ENCODE measurements at regions of chr5 and their contacts with region 1.

Region 1: GRCh38 chr5:140267559-140268018 is 35.3 kb downstream of the PFDN1 start:
- DNase-seq: peak; percentile 54
- H3K4me3 ChIP-seq: peak overlapping the region; percentile 56
- H3K27ac ChIP-seq: peak overlapping the region; percentile 100
- H3K4me1 ChIP-seq: peaks cover 48% of the 10 kb centered on the region
- CTCF ChIP-seq: no peak

Region 2: GRCh38 chr5:140058212-140058932 is 209.2 kb before region 1 on chr5:
- CTCF ChIA-PET with region 1: no interaction called
- POLR2A ChIA-PET with region 1: no interaction called
- intact Hi-C with region 1: no loop called
- DNase-seq: no peak
- H3K4me3 ChIP-seq: no peak overlapping the region
- H3K27ac ChIP-seq: no peak overlapping the region
- H3K4me1 ChIP-seq: no peaks in the 10 kb centered on the region
- CTCF ChIP-seq: no peak

Region 3: DNA sequence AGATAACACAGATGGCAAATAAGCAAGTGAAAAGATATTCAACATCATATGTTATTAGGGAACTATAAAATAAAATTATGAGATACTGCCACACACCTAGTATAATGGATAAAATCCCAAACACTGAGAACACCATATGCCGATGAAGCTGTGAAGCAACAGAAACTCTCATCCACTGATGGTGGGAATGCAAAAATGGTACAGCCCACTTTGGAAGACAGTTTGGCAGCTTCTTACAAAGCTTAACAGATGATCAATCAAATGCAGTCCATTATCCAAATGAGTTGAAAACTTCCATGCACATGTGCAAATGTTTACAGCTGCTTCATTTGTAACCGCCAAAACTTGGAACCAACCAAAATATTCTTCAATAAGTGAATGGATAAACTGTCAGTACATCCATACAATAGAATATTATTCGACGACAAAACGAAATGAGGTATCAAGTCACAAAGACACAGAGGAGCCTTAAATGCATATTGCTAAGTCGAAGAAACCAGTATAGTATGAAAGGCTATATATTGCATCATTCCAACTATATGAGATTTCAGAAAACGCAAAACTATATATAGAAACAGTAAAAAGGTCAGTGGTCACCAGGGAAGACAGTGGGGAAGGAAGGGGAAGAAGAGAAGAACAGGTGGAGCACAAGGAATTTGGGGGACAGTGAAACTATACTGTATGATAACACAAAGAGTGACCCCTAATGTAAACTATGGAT is 20.4 kb after region 1 on chr5:
- CTCF ChIA-PET with region 1: no interaction called
- POLR2A ChIA-PET with region 1: interaction called, 81 read pairs
- intact Hi-C with region 1: loop called (anchors 1 kb)
- DNase-seq: no peak
- H3K4me3 ChIP-seq: no peak overlapping the region
- H3K27ac ChIP-seq: no peak overlapping the region
- H3K4me1 ChIP-seq: peaks cover 55% of the 10 kb centered on the region
- CTCF ChIP-seq: no peak

Region 4: DNA sequence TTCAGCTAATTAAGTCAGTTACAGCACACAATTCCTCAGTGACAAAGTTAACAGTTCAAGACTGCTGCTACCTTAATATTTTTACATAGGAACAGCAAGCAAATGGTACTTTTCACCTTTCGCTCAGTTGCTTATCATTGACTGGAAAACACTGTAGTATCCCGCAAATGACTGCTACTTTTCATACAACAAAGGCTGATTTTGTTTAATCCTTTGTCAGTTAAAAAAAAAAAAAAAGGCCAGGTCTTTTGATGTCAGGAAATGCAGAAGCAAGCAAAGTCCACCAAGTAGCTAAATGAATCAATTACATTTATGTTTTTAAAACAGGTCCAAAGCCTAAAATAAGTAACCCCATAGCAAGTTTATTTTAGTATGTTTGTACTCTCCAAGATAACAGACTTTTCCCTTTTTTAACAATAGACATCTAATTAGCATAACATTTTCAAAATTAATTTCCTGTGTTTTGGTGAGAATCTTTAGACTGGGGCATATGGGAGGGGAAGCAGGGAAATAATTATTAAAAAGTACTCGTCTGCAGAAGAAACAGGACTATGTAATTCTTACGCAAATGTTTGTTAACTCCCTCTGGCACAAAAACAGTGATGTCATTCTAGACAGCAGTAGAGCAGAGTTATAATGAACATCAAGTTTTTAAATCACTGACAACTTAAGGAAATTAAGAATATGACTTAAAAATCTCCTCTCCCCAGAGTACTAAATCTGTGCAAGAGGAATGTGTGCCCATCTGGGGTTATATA is 25.7 kb after region 1 on chr5:
- CTCF ChIA-PET with region 1: no interaction called
- POLR2A ChIA-PET with region 1: interaction called, 15 read pairs
- intact Hi-C with region 1: no loop called
- DNase-seq: no peak
- H3K4me3 ChIP-seq: peak overlapping the region; percentile 11
- H3K27ac ChIP-seq: peak overlapping the region; percentile 10
- H3K4me1 ChIP-seq: peaks cover 39% of the 10 kb centered on the region
- CTCF ChIP-seq: no peak

Region 5: GRCh38 chr5:140302786-140303639 is 35.4 kb after region 1 on chr5 and contains the start of gene PFDN1:
- CTCF ChIA-PET with region 1: no interaction called
- POLR2A ChIA-PET with region 1: interaction called, 11 read pairs
- intact Hi-C with region 1: no loop called
- DNase-seq: peak; percentile 98
- H3K4me3 ChIP-seq: peak within 1 kb of the TSS; percentile 98
- H3K27ac ChIP-seq: peak within 1 kb of the TSS; percentile 26
- H3K4me1 ChIP-seq: peaks cover 18% of the 10 kb centered on the region
- CTCF ChIP-seq: no peak
- total RNA-seq, gene PFDN1: 36.6 and 51.3 TPM in 2 replicates

Measured in OCI-LY7 (cell line).